ENCODE measurements at regions of chr6 and their contacts with region 1.

Region 1: DNA sequence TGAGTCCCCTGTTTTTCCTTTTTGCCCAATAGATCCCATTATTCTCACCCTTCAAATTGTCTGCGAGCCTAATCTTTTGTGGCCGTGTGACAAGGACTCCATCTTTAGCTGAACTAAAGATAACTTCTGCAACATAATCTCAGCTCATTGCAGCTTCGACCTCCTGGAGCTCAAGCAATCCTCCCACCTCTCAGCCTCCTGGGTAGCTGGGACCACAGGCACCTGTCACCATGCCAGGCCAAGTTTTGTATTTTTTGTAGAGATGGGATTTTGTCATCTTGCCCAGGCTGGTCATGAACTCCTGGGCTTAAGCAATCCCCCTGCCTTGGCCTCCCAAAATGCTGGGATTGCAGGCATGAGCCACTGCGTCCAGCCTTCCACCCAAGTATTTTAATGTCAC is 161.0 kb downstream of the GJA1 start:
- DNase-seq: no peak
- ATAC-seq: no peak
- H3K4me3 Mint-ChIP-seq: no peak overlapping the region
- H3K27ac Mint-ChIP-seq: no peak overlapping the region
- H3K4me1 Mint-ChIP-seq: no peaks in the 10 kb centered on the region
- H3K27me3 Mint-ChIP-seq: no peaks in the 10 kb centered on the region
- CTCF ChIP-seq: no peak

Region 2: DNA sequence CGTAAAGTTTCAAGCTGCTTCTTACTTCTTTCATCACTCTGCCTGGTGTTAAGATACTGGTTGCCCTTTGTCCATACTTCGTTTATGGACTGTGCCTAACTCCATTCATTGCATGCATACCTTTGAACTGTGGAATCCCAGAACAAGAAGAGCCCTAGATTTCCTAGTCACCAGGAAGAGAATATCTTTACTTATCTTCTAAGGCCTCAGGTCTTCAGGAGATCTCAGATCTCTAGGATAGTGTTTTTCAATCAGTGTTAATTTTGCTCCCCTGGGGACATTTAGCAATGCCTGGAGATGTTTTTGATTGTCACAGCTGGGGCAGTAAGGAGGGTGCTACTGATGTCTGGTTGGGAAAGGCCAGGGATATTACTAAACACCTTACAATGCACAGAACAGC is 196.5 kb before region 1 on chr6:
- CTCF ChIA-PET with region 1: no interaction called
- POLR2A ChIA-PET with region 1: no interaction called
- intact Hi-C with region 1: no loop called
- DNase-seq: no peak
- ATAC-seq: no peak
- H3K4me3 Mint-ChIP-seq: no peak overlapping the region
- H3K27ac Mint-ChIP-seq: no peak overlapping the region
- H3K4me1 Mint-ChIP-seq: no peaks in the 10 kb centered on the region
- H3K27me3 Mint-ChIP-seq: no peaks in the 10 kb centered on the region
- CTCF ChIP-seq: no peak

Region 3: GRCh38 chr6:121617388-121617787 is 20.9 kb after region 1 on chr6:
- CTCF ChIA-PET with region 1: no interaction called
- POLR2A ChIA-PET with region 1: interaction called, 10 read pairs
- intact Hi-C with region 1: no loop called
- DNase-seq: no peak
- ATAC-seq: no peak
- H3K4me3 Mint-ChIP-seq: no peak overlapping the region
- H3K27ac Mint-ChIP-seq: no peak overlapping the region
- H3K4me1 Mint-ChIP-seq: no peaks in the 10 kb centered on the region
- H3K27me3 Mint-ChIP-seq: no peaks in the 10 kb centered on the region
- CTCF ChIP-seq: no peak